ENCODE measurements at regions of chr9 and their contacts with region 1.

Region 1: GRCh38 chr9:4762108-4762885 is 21.3 kb upstream of the AK3 start:
- DNase-seq: peak; percentile 87
- H3K4me3 ChIP-seq: peak overlapping the region in 6 of 8 donors; percentile 17 to 58 (median 26)
- H3K27ac ChIP-seq: peak overlapping the region in 7 of 8 donors; percentile 73 to 94 (median 86)
- H3K4me1 ChIP-seq: peaks cover 7 to 53% (median 34%) of the 10 kb centered on the region in 6 donors
- H3K27me3 ChIP-seq: no peaks in the 10 kb centered on the region
- CTCF ChIP-seq: peak; percentile 62 to 94 (median 87)
- POLR2A ChIP-seq: no peak

Region 2: GRCh38 chr9:4796988-4797853 is 34.9 kb after region 1 on chr9:
- intact Hi-C with region 1: loop called (anchors 5 kb)
- DNase-seq: no peak
- H3K4me3 ChIP-seq: peak overlapping the region in 1 of 8 donors; percentile 17
- H3K27ac ChIP-seq: peak overlapping the region in 7 of 8 donors; percentile 23 to 81 (median 69)
- H3K4me1 ChIP-seq: peaks cover 30 to 64% (median 46%) of the 10 kb centered on the region in 6 donors
- H3K27me3 ChIP-seq: no peaks in the 10 kb centered on the region
- CTCF ChIP-seq: peak; percentile 16 to 71 (median 62)
- POLR2A ChIP-seq: no peak

Region 3: GRCh38 chr9:4923580-4924544 is 161.6 kb after region 1 on chr9:
- intact Hi-C with region 1: loop called (anchors 10 kb)
- DNase-seq: no peak
- H3K4me3 ChIP-seq: no peak overlapping the region
- H3K27ac ChIP-seq: no peak overlapping the region
- H3K4me1 ChIP-seq: peaks cover 0 to 9% (median 6%) of the 10 kb centered on the region in 6 donors
- H3K27me3 ChIP-seq: no peaks in the 10 kb centered on the region
- CTCF ChIP-seq: peak in 8 of 11 experiments; percentile 20 to 58 (median 44)
- POLR2A ChIP-seq: no peak

Region 4: DNA sequence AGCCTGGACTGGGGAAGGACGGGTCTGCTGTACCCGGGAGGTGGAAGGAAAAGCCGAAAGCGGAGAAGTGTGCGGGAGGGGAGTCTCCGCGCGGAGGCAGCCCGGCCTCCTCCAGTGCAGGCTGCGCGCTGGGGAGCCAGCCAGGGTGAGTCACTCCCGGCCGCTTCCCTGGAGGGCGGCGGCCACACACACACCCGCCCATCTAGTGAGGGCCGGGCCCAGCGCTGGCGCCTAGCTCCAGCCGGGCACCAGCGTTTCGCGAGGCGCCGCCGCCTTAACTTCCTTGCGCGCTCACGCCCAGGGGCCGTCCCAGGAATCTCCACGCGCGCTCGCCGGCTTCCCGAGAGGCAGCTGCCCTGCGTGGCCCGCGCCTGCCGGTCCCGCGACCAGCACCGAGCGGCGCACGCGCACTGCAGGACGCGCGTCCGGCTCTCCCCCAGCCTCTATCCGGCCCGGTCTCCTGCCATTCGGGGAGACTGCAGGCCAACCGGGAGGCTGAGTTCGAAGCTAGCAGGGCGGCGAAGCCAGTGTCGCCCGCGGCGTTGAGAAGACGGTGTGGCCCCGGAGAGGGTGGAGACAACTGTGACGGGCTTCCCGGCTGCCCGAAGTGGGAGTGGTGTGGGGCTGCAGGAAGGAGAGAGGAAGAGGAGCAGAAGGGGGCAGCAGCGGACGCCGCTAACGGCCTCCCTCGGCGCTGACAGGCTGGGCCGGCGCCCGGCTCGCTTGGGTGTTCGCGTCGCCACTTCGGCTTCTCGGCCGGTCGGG is 222.5 kb after region 1 on chr9 and contains the start of gene JAK2:
- intact Hi-C with region 1: loop called (anchors 5 kb)
- DNase-seq: peak; percentile 97
- H3K4me3 ChIP-seq: peak within 1 kb of the TSS; percentile 66 to 87 (median 78)
- H3K27ac ChIP-seq: peak within 1 kb of the TSS; percentile 96 to 99 (median 98)
- H3K4me1 ChIP-seq: peaks cover 32 to 80% (median 65%) of the 10 kb centered on the region in 6 donors
- H3K27me3 ChIP-seq: no peaks in the 10 kb centered on the region
- CTCF ChIP-seq: peak in 7 of 11 experiments; percentile 36 to 67 (median 58)
- POLR2A ChIP-seq: peak; percentile 65 to 86 (median 80)
- total RNA-seq, gene JAK2: 40.9 to 61.2 (median 54.6) TPM

Region 5: GRCh38 chr9:5110867-5111713 is 348.8 kb after region 1 on chr9:
- intact Hi-C with region 1: no loop called
- DNase-seq: peak; percentile 69
- H3K4me3 ChIP-seq: no peak overlapping the region
- H3K27ac ChIP-seq: no peak overlapping the region
- H3K4me1 ChIP-seq: no peaks in the 10 kb centered on the region
- H3K27me3 ChIP-seq: no peaks in the 10 kb centered on the region
- CTCF ChIP-seq: no peak
- POLR2A ChIP-seq: no peak

Region 6: GRCh38 chr9:5608298-5609225 is 846.3 kb after region 1 on chr9:
- intact Hi-C with region 1: loop called (anchors 10 kb)
- DNase-seq: no peak
- H3K4me3 ChIP-seq: peak overlapping the region in 4 of 8 donors; percentile 5 to 58 (median 19)
- H3K27ac ChIP-seq: peak overlapping the region in 6 of 8 donors; percentile 13 to 76 (median 52)
- H3K4me1 ChIP-seq: peaks cover 0 to 28% (median 16%) of the 10 kb centered on the region in 6 donors
- H3K27me3 ChIP-seq: no peaks in the 10 kb centered on the region
- CTCF ChIP-seq: no peak
- POLR2A ChIP-seq: peak in 1 of 3 donors; percentile 12

Measured in spleen (tissue), 13 donors.